ENCODE measurements at regions of chr1 and their contacts with region 1.

Region 1: DNA sequence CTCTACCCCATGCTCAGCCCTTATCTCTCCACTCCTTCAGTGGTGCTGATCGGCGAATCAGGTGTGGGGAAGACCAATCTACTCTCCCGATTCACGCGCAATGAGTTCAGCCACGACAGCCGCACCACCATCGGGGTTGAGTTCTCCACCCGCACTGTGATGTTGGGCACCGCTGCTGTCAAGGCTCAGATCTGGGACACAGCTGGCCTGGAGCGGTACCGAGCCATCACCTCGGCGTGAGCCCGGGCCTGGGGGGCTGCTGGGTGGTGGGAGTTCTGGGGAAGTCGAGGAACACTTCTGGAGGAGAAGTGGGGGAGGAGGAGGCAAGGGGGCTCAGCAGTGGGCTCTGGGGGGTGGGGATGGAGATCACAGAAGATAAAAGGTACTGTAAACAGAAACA is 4.9 kb downstream of the RAB25 start:
- DNase-seq: no peak
- ATAC-seq: no peak
- H3K4me3 ChIP-seq: no peak overlapping the region
- H3K4me3 Mint-ChIP-seq: no peak overlapping the region
- H3K27ac ChIP-seq: no peak overlapping the region
- H3K27ac Mint-ChIP-seq: no peak overlapping the region
- H3K4me1 ChIP-seq: no peaks in the 10 kb centered on the region
- H3K4me1 Mint-ChIP-seq: peaks cover 3% of the 10 kb centered on the region
- H3K27me3 ChIP-seq: no peaks in the 10 kb centered on the region
- H3K27me3 Mint-ChIP-seq: no peaks in the 10 kb centered on the region
- CTCF ChIP-seq: no peak

Region 2: DNA sequence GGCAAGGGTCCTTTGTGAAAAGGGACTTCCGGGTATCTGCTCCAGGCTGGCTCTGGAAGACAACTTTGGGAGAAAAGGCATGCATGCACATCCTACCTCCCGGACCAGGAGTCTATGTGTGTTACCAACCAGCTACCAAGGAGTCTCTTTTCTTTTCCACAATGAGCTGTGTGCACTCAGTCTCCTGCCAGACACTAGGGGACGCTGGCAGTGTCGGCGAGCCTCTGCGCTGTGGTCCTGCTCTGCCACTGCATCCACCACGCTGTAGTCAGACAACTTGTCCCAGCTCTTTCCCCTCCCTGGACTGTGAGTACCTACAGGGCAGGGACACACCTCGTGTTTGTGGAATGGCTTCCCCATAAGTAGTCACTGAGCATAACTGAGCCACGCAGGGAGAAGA is 40.0 kb before region 1 on chr1:
- CTCF ChIA-PET with region 1: interaction called, 4 read pairs
- POLR2A ChIA-PET with region 1: no interaction called
- intact Hi-C with region 1: loop called in 1 of 2 experiments (anchors 1 kb)
- DNase-seq: peak in 6 of 9 experiments; percentile 2 to 59 (median 25)
- ATAC-seq: peak; percentile 88
- H3K4me3 ChIP-seq: no peak overlapping the region
- H3K4me3 Mint-ChIP-seq: no peak overlapping the region
- H3K27ac ChIP-seq: no peak overlapping the region
- H3K27ac Mint-ChIP-seq: no peak overlapping the region
- H3K4me1 ChIP-seq: peaks cover 4% of the 10 kb centered on the region
- H3K4me1 Mint-ChIP-seq: peaks cover 7% of the 10 kb centered on the region
- H3K27me3 ChIP-seq: peaks cover 0 to 5% of the 10 kb centered on the region in 2 experiments
- H3K27me3 Mint-ChIP-seq: peaks cover 2% of the 10 kb centered on the region
- CTCF ChIP-seq: peak; percentile 46

Measured in CD8-positive, alpha-beta T cell (primary cell).